ENCODE measurements at regions of chr16 and their contacts with region 1.

Region 1: GRCh38 chr16:79601931-79602627 is 1.5 kb upstream of the MAF start:
- ATAC-seq: peak in 3 of 8 experiments; percentile 2 to 5 (median 4)
- H3K4me3 ChIP-seq: peak overlapping the region; percentile 47 to 67 (median 54)
- H3K27ac ChIP-seq: no peak overlapping the region
- H3K4me1 ChIP-seq: peaks cover 7 to 22% of the 10 kb centered on the region in 2 donors

Region 2: GRCh38 chr16:78099372-78100161 is 1502.5 kb before region 1 on chr16 and contains the start of gene WWOX:
- in situ Hi-C with region 1: loop called in 1 of 9 experiments (anchors 25 kb)
- ATAC-seq: peak; percentile 95 to 96 (median 96)
- H3K4me3 ChIP-seq: peak within 1 kb of the TSS; percentile 54 to 78 (median 67)
- H3K27ac ChIP-seq: peak within 1 kb of the TSS; percentile 10 to 18
- H3K4me1 ChIP-seq: no peaks in the 10 kb centered on the region
- total RNA-seq, gene WWOX: 10.3 to 27.8 (median 12.3) TPM

Region 3: GRCh38 chr16:78122774-78123315 is 1479.2 kb before region 1 on chr16:
- in situ Hi-C with region 1: loop called in 2 of 9 experiments (anchors 10 to 25 kb)
- ATAC-seq: peak; percentile 56 to 99 (median 75)
- H3K4me3 ChIP-seq: no peak overlapping the region
- H3K27ac ChIP-seq: no peak overlapping the region
- H3K4me1 ChIP-seq: peaks cover 0 to 6% of the 10 kb centered on the region in 2 donors

Region 4: DNA sequence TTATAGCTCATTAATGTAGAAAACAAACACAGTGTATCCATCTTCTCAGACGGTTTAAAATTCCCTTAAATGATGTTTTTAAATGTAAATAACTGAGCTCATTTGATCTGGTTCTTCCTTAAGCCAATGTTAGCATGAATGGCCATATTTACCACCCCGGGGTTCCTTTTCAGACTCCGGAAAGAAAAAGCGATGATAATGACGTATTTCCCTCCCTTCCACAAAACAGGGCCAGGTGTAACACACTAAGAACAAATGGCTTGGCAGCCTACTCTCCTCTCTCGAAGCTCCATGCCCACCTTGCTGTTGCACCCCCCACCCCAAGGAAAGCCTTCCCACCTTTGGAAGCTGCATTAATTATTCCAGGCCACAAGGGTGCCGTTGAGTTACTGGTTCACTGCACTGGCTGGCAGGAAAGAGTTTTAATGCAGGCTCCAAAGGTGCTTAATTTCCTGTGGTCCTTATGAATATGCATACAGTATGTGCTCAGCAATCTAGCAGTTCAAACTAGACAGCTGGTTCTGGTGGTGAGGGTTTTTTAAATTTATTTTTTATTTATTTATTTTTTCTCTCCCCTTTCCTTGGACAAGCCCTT is 1123.7 kb before region 1 on chr16:
- in situ Hi-C with region 1: loop called in 1 of 9 experiments (anchors 25 kb)
- ATAC-seq: peak in 3 of 8 experiments; percentile 36 to 60 (median 60)
- H3K4me3 ChIP-seq: no peak overlapping the region
- H3K27ac ChIP-seq: no peak overlapping the region
- H3K4me1 ChIP-seq: peaks cover 2 to 19% of the 10 kb centered on the region in 2 donors

Region 5: DNA sequence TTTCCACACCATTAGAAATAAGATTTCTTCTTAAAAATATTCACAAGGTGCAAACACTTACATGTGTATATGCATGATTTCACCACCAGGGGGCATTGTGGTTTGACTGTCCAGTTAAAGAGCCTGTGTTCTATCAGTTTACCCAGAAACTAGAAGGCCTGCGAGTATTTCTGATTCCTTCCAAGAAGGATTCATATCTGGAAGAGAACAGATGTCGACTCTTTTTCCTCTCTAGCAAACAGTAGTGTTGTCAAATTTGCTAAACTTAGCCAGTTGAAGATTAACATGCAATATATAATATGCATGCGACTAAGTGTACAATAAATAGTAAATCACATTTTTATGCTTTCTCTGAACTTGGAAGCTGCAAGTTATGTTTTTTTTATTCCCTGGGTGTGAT is 1098.5 kb before region 1 on chr16:
- in situ Hi-C with region 1: loop called in 2 of 9 experiments (anchors 25 kb)
- ATAC-seq: peak; percentile 12 to 59 (median 46)
- H3K4me3 ChIP-seq: no peak overlapping the region
- H3K27ac ChIP-seq: no peak overlapping the region
- H3K4me1 ChIP-seq: peaks cover 22% of the 10 kb centered on the region in 2 donors

Region 6: GRCh38 chr16:79390481-79391051 is 211.5 kb before region 1 on chr16:
- in situ Hi-C with region 1: no loop called
- ATAC-seq: no peak
- H3K4me3 ChIP-seq: no peak overlapping the region
- H3K27ac ChIP-seq: no peak overlapping the region
- H3K4me1 ChIP-seq: peaks cover 0 to 7% of the 10 kb centered on the region in 2 donors

Region 7: DNA sequence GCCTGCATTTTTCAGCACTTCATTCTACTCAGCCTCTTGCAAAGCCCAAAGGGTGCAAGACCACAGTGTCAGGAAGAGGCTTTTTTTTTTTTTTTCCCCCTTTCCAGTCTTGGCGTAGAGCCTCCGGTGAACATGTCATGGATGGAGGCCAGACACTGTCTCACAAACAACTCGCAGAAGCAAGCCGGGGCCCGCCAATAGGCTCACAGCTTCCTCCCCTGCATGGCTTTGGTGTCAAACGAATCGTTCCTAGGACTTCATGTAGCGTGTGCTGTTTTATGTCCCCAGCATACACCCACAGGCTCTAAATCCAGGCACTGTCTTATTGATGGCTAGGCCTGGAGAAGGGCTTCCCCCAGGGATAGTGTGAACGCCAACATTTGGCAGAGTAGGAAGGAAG is 456.1 kb after region 1 on chr16:
- in situ Hi-C with region 1: loop called in 1 of 9 experiments (anchors 25 kb)
- ATAC-seq: no peak
- H3K4me3 ChIP-seq: no peak overlapping the region
- H3K27ac ChIP-seq: no peak overlapping the region
- H3K4me1 ChIP-seq: no peaks in the 10 kb centered on the region

Region 8: DNA sequence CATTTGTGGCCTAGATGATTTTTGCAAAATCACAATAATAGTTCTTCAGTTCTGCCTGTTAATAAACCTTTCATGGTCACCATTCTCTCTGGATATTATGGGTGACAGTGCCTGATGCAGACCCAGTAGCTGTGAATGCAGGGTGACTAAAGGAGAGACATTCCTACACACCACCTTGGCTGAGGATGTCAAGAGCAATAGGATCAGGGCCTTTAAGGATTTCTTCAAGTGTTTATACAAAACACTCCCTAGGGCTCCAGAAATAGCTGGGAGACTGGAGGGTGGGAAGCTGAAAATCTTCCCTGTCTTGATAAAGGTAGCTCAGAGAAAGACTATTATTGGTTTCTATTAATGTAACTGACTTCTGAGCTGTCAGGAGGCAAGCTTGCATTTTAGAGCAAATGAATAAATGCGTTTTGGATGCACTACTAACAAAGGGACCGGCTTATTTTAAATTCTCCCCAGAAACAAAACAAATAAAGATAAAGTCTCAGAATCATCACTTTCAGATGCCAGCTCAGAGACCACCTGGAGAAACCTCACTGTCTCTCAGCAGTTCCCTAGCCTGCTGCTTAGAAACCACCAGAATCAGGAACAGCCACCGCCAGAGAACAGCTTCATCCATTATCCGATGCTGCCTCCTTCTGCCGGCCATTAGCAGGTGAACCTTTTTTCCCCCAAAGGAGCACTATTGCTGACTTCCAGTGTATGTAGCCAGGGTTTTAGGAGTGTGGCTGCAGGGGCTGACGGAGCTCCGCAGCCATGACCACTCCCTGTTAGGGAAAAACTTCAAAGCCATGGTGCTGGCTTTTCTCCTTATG is 767.3 kb after region 1 on chr16:
- in situ Hi-C with region 1: loop called in 1 of 9 experiments (anchors 25 kb)
- ATAC-seq: peak; percentile 88 to 99 (median 92)
- H3K4me3 ChIP-seq: no peak overlapping the region
- H3K27ac ChIP-seq: no peak overlapping the region
- H3K4me1 ChIP-seq: no peaks in the 10 kb centered on the region